GM12878 (cell line): ENCODE measurements at regions of chr12 and their contacts with region 1.

Region 1: GRCh38 chr12:54368709-54369583 is 4.7 kb upstream of the GPR84 start:
- DNase-seq: no peak
- ATAC-seq: peak; percentile 92
- H3K4me3 ChIP-seq: no peak overlapping the region
- H3K27ac ChIP-seq: no peak overlapping the region
- H3K4me1 ChIP-seq: peaks cover 24% of the 10 kb centered on the region
- H3K27me3 ChIP-seq: no peaks in the 10 kb centered on the region
- CTCF ChIP-seq: peak; percentile 91 to 99 (median 98); a peak in 5 of 6 replicates
- EP300 ChIP-seq: no peak
- POLR2A ChIP-seq: no peak
- RAD21 ChIP-seq: peak; percentile 93

Region 2: GRCh38 chr12:54017878-54018467 is 351.0 kb before region 1 on chr12:
- CTCF ChIA-PET with region 1: no interaction called
- POLR2A ChIA-PET with region 1: no interaction called
- RAD21 ChIA-PET with region 1: no interaction called
- SMC1A ChIA-PET with region 1: no interaction called
- in situ Hi-C with region 1: loop called (anchors 10 kb)
- intact Hi-C with region 1: no loop called
- DNase-seq: peak; percentile 79
- ATAC-seq: peak; percentile 92
- H3K4me3 ChIP-seq: peak overlapping the region; percentile 88
- H3K27ac ChIP-seq: peak overlapping the region; percentile 80
- H3K4me1 ChIP-seq: peaks cover 21% of the 10 kb centered on the region
- H3K27me3 ChIP-seq: peaks cover 8 to 26% of the 10 kb centered on the region in 2 experiments
- CTCF ChIP-seq: no peak
- EP300 ChIP-seq: peak; percentile 36 to 45; a peak in 1 of 4 replicates
- POLR2A ChIP-seq: peak; percentile 79
- RAD21 ChIP-seq: no peak

Region 3: DNA sequence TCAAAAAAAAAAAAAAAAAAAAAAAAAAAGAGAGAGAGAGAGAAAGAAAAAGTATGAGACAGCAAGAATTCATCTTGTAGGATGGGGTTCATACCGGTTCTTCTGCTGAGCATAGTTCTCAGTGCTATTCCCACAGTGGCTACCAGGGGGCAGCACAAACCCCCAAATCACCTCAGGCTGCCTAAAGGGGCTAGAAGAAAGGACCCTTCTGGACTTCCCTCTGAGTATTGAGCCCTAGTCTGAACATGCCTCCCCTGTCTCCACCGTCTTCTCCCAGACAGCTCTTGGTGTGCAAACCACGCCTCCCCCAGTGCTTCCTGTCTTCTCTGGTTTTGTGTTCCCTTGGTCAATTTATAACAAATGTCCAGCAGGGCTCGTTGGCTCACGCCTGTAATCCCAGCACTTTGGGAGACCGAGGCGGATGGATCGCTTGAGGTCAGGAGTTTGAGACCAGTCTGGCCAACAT is 148.8 kb before region 1 on chr12:
- CTCF ChIA-PET with region 1: interaction called, 83 read pairs
- POLR2A ChIA-PET with region 1: no interaction called
- RAD21 ChIA-PET with region 1: interaction called, 18 read pairs
- SMC1A ChIA-PET with region 1: interaction called, 12 read pairs
- in situ Hi-C with region 1: loop called (anchors 5 kb)
- intact Hi-C with region 1: loop called (anchors 1 kb)
- DNase-seq: no peak
- ATAC-seq: peak; percentile 58
- H3K4me3 ChIP-seq: no peak overlapping the region
- H3K27ac ChIP-seq: no peak overlapping the region
- H3K4me1 ChIP-seq: peaks cover 30% of the 10 kb centered on the region
- H3K27me3 ChIP-seq: peaks cover 0 to 1% of the 10 kb centered on the region in 2 experiments; a peak in 1 of 4 replicates
- CTCF ChIP-seq: peak; percentile 84 to 90 (median 90)
- EP300 ChIP-seq: no peak
- POLR2A ChIP-seq: no peak
- RAD21 ChIP-seq: peak; percentile 87

Region 4: DNA sequence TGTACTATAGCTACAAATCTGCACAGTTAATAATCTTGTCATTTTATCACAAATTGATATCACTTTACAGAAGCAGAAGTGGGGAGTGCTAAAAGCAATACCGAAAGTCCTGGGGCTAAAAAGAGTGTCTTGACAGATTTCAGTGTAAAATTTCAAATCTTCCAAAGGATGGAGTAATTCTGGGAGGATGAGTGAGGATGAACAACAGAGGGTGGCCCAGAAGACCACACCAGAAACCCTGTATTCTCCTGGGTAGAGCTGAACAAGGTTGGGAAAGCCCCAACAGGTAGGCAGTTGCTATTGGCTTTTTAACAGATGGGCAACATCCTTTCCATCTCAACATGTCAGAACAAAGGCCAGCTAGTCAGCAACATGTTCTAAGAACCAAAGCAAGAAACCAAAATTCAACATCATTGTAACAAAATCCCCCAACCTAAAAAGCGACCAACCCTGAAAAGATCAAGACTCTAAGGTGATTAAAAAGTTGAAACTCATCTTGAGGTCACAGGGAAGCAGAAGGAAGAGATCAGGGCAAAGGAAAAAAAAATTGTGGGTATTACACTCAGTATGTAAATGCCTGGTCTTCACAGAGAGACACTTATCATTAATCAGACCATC is 127.9 kb before region 1 on chr12:
- CTCF ChIA-PET with region 1: interaction called, 17 read pairs
- POLR2A ChIA-PET with region 1: no interaction called
- RAD21 ChIA-PET with region 1: interaction called, 3 read pairs
- SMC1A ChIA-PET with region 1: interaction called, 4 read pairs
- in situ Hi-C with region 1: no loop called
- intact Hi-C with region 1: no loop called
- DNase-seq: peak; percentile 80
- ATAC-seq: peak; percentile 95
- H3K4me3 ChIP-seq: no peak overlapping the region
- H3K27ac ChIP-seq: peak overlapping the region; percentile 45
- H3K4me1 ChIP-seq: peaks cover 16% of the 10 kb centered on the region
- H3K27me3 ChIP-seq: no peaks in the 10 kb centered on the region
- CTCF ChIP-seq: no peak
- EP300 ChIP-seq: 0 out of 4 replicates have a peak, but pooled peaks of 1 of the 2 experiments have one; percentile 39
- POLR2A ChIP-seq: no peak
- RAD21 ChIP-seq: no peak

Region 5: GRCh38 chr12:54337280-54337842 is 31.6 kb before region 1 on chr12:
- CTCF ChIA-PET with region 1: interaction called, 113 read pairs
- POLR2A ChIA-PET with region 1: no interaction called
- RAD21 ChIA-PET with region 1: interaction called, 7 read pairs
- SMC1A ChIA-PET with region 1: interaction called, 19 read pairs
- in situ Hi-C with region 1: no loop called
- intact Hi-C with region 1: loop called (anchors 1 kb)
- DNase-seq: no peak
- ATAC-seq: no peak
- H3K4me3 ChIP-seq: no peak overlapping the region
- H3K27ac ChIP-seq: no peak overlapping the region
- H3K4me1 ChIP-seq: no peaks in the 10 kb centered on the region
- H3K27me3 ChIP-seq: no peaks in the 10 kb centered on the region
- CTCF ChIP-seq: 0 out of 6 replicates have a peak, but pooled peaks of 1 of the 3 experiments have one; percentile 5
- EP300 ChIP-seq: no peak
- POLR2A ChIP-seq: no peak
- RAD21 ChIP-seq: 0 out of 2 replicates have a peak, but pooled peaks have one; percentile 16

Region 6: DNA sequence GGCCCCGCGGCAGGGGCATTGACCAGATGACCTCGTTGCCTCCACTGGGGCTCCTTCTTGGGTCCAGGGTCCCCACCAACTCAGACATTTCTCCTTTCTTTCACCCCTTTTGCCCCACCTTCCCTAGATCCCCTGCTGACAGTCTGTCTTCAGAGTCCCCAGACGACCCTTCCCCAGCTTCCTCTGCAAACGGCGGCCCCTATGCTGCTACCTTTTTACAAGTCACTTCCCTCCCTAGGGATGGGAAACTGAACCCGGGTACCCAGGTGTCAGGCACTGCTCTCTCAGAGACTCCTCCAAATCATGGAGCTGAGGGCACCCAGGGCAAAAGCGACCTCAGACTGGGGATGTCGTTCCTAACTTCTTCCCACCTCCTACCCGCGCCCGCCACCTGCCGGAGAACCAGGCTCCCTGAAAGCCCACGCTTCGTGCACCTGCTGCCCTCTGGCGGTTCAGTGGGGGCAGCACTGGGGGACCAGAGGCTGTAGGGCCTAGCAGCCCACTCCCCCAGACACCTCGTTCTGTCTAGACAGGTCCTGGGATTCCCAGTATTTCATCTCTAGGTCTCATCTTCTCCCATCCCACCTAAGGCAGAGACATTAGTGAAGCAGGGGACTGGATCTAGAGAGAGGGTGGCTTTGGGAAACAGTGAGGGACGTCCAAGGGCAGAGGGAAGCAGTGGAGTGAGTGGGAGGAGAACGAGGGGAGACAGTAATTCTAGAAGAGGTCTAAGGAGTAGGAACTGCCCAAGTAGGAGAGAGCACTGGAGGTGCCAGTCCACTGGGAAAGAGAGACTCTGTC is 10.7 kb after region 1 on chr12:
- CTCF ChIA-PET with region 1: interaction called, 66 read pairs
- POLR2A ChIA-PET with region 1: interaction called, 4 read pairs
- RAD21 ChIA-PET with region 1: interaction called, 16 read pairs
- SMC1A ChIA-PET with region 1: interaction called, 14 read pairs
- in situ Hi-C with region 1: no loop called
- intact Hi-C with region 1: no loop called
- DNase-seq: no peak
- ATAC-seq: peak; percentile 95
- H3K4me3 ChIP-seq: no peak overlapping the region
- H3K27ac ChIP-seq: no peak overlapping the region
- H3K4me1 ChIP-seq: peaks cover 4% of the 10 kb centered on the region
- H3K27me3 ChIP-seq: no peaks in the 10 kb centered on the region
- CTCF ChIP-seq: peak; percentile 100; a peak in 5 of 6 replicates
- EP300 ChIP-seq: no peak
- POLR2A ChIP-seq: no peak
- RAD21 ChIP-seq: peak; percentile 73

Region 7: DNA sequence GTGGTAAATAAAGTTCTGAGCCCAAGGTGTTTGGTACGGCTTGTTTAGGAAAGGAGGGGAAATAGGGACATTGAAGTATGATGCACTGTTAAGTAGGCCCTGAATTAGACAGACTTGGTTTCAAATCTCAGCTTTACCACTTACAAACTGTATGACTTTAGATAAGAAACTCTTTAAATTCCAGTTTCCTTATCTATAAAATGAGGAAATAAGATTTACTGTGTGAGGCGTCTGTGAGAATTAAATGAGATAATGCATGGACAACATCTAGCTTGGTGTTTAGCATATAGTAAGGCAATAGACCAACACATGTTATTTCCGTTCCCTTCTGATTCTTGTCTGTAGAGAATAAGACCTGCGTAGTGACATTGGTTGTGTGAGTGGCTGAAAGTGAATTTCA is 135.6 kb after region 1 on chr12:
- CTCF ChIA-PET with region 1: no interaction called
- POLR2A ChIA-PET with region 1: no interaction called
- RAD21 ChIA-PET with region 1: no interaction called
- SMC1A ChIA-PET with region 1: no interaction called
- in situ Hi-C with region 1: no loop called
- intact Hi-C with region 1: no loop called
- DNase-seq: no peak
- ATAC-seq: no peak
- H3K4me3 ChIP-seq: no peak overlapping the region
- H3K27ac ChIP-seq: no peak overlapping the region
- H3K4me1 ChIP-seq: peaks cover under 1% of the 10 kb centered on the region; the same call in 1 of the 2 replicates
- H3K27me3 ChIP-seq: no peaks in the 10 kb centered on the region
- CTCF ChIP-seq: no peak
- EP300 ChIP-seq: no peak
- POLR2A ChIP-seq: no peak
- RAD21 ChIP-seq: no peak